Right cardiac atrium (tissue), 5 donors: ENCODE measurements at regions of chr1 and their contacts with region 1.

Region 1: DNA sequence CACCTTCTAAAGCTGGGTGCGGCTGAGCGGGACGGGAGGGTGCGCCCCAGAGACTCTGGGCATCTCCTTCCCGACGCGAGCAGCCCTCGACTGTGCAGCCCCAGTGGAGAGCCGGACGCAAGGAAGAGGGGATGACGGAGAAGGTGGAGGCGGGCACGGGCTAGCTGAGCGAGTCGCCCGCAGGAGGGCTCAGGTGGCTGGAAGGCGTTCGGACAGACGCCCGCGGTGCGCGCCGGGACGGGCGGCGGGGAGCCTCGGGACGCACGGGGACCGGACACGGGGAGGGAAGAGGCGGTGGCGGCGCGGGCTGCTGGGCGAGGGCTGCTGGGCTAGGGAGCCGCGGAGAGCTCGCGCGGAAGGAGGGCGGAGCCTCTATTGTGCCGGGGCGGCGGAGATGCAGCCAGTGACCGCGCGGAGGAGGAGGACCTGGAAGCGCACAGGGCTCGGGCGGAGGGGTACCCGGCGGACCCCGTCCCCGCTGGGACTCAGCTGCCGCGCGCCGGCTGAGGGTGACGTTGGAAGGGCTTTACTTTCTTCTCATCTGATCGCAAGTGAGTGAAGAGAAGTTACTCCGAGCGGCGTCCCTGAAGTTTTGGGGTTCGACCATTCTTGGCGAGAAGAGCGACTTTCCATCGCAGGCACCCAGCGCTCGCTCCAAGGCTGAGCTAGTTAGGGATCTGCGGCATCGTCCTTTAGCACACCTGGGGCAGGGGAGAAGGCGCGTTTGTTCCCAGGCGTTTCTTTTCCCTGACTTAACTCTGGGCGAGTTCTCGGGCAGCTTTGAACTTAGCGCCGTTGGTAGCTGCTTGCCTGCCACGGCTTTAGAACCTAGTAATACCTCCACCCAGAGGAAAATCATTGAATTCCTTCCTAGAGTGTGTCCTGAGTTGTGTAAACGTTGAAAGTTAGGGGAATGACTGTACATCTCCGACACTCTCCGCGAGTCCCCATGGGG is at the start of gene OLFML2B:
- DNase-seq: peak; percentile 80 to 92 (median 91)
- ATAC-seq: peak; percentile 91 to 94
- H3K4me3 ChIP-seq: peak within 1 kb of the TSS; percentile 81
- H3K27ac ChIP-seq: no peak within 1 kb of the TSS
- H3K4me1 ChIP-seq: peaks cover 15% of the 10 kb centered on the region
- H3K27me3 ChIP-seq: no peaks in the 10 kb centered on the region
- total RNA-seq, gene OLFML2B: 1.8 to 8.9 (median 5.4) TPM

Region 2: DNA sequence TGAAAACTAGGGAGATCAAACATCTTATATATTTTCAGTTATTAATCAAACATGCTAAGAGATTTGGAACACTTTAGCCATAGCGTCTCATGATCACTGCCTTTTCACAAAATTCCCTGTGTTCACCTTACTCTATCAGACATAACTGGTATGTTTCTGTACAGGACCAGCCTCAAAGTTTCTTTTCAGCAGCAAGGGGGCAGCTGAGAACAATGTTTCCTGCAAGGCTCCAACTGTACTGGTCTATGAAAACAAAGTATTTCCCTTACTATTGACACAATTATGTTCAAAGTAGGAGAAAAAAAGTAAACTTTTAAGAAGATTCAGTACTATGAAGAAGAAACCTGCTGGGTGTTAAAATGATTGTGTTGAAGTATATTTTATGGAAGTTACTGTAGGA is 159.2 kb before region 1 on chr1:
- intact Hi-C with region 1: loop called in 1 of 4 experiments (anchors 5 kb)
- DNase-seq: peak in 1 of 3 donors; percentile 39
- ATAC-seq: peak in 1 of 2 donors; percentile 64
- H3K4me3 ChIP-seq: no peak overlapping the region
- H3K27ac ChIP-seq: no peak overlapping the region
- H3K4me1 ChIP-seq: no peaks in the 10 kb centered on the region
- H3K27me3 ChIP-seq: no peaks in the 10 kb centered on the region

Region 3: DNA sequence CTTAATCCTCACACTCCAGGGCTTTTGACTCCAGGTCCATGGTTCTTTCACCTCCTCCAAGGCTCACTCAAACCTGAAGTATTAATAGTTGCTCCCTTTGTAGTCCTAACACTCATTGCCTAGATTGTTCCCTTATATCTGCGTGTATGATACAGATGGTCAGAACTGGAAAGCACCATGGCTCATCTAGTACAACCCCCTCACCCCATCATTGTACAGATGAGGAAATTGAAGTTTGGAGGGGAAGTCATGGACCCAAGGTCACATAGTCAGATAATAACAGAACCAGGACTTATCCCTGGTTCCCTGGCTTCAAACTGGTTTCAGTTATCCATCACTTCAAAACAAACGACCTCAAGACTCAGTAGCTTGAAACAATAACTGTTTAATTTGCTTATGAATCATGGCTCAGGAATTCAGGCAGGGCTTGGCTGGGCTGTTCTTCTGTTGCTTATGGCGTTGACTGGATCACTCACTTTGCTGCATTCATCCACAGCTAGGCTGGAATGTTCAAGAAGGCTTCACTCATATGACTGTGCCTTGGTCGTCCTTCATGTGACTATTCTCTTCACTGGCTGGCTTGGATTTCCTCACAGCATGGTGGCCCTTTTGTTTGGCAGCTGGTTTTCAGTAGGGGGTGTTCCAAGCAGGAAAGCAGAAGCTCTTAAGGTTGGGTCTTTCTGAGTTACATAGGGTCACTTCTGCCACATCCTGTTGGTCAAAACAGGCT is 50.6 kb after region 1 on chr1:
- intact Hi-C with region 1: no loop called
- DNase-seq: no peak
- ATAC-seq: no peak
- H3K4me3 ChIP-seq: no peak overlapping the region
- H3K27ac ChIP-seq: no peak overlapping the region
- H3K4me1 ChIP-seq: peaks cover 3% of the 10 kb centered on the region
- H3K27me3 ChIP-seq: no peaks in the 10 kb centered on the region

Region 4: DNA sequence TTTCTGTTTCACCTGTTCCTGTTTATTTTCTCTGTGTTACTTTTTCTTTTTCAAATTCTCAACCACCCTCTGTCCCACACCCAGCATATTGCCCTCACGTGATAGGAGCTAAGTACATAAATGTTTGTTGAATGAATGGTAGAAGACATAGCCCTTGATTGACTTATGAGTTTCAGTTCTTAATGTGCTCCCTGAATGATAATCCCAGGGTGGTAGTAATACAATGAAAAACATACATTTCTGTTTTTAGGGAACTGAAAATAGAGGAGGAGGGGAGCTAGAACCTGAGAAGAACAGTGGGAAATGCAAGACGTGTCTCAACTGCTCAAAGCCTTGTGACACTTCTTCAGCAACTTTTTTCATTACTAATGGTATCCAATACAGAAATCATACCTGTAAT is 205.7 kb after region 1 on chr1:
- intact Hi-C with region 1: no loop called
- DNase-seq: no peak
- ATAC-seq: no peak
- H3K4me3 ChIP-seq: no peak overlapping the region
- H3K27ac ChIP-seq: no peak overlapping the region
- H3K4me1 ChIP-seq: no peaks in the 10 kb centered on the region
- H3K27me3 ChIP-seq: no peaks in the 10 kb centered on the region